Mammary epithelial cell (primary cell): ENCODE measurements at regions of chr6 and their contacts with region 1.

Region 1: GRCh38 chr6:3887150-3887700 is 38.1 kb downstream of the FAM50B start:
- DNase-seq: no peak
- H3K4me3 ChIP-seq: no peak overlapping the region
- H3K27ac ChIP-seq: no peak overlapping the region
- H3K4me1 ChIP-seq: peaks cover 11% of the 10 kb centered on the region
- H3K27me3 ChIP-seq: no peaks in the 10 kb centered on the region
- CTCF ChIP-seq: peak; percentile 38 to 61

Region 2: GRCh38 chr6:3977875-3978711 is 90.9 kb after region 1 on chr6:
- CTCF ChIA-PET with region 1: no interaction called
- dilution Hi-C with region 1: no loop called
- in situ Hi-C with region 1: no loop called
- intact Hi-C with region 1: loop called (anchors 5 kb)
- DNase-seq: peak; percentile 56
- H3K4me3 ChIP-seq: no peak overlapping the region
- H3K27ac ChIP-seq: no peak overlapping the region
- H3K4me1 ChIP-seq: no peaks in the 10 kb centered on the region
- H3K27me3 ChIP-seq: no peaks in the 10 kb centered on the region
- CTCF ChIP-seq: peak; percentile 50 to 59

Region 3: DNA sequence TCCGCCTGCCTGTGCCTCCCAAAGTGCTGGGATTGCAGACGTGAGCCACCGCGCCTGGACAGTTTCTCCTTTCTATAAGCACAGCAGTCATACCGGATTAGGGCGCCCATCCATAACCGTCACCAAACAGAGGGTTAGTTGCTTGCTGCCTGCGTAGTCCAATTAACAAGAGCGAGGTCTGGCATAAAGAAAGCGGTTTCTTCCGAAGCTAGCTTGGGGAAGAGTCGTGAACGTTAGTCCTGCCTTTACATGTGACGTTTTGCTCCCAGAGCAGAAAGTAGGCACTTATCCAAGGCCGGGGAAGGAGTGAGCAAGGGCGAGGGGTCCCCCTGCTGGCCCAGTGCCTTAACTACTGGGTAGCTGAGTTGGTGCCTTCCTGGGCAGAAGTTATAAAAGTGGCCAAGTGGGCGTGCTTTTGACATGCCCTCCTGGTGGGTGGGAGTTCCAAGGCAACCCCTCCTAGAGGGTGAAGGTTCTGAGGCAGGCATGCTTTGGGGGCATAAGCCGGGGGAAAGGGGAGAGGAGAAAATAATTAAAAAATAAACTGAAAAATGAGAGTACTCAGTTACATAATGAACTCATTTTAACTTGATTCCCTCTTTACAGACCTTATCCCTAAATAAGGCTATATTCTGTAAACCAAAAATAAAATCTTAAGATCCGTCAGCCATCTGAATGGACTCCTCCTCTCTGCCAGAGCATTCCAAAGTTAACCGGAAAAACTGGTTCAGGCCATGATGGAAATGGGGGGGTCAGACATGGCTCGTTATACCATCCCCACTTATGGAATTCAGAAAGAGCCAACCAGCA is 103.7 kb after region 1 on chr6:
- CTCF ChIA-PET with region 1: no interaction called
- dilution Hi-C with region 1: no loop called
- in situ Hi-C with region 1: no loop called
- intact Hi-C with region 1: loop called (anchors 5 kb)
- DNase-seq: peak; percentile 77
- H3K4me3 ChIP-seq: peak overlapping the region; percentile 27 to 42 (median 41)
- H3K27ac ChIP-seq: peak overlapping the region; percentile 42
- H3K4me1 ChIP-seq: peaks cover 13% of the 10 kb centered on the region
- H3K27me3 ChIP-seq: no peaks in the 10 kb centered on the region
- CTCF ChIP-seq: peak; percentile 90 to 97

Region 4: GRCh38 chr6:4008324-4009047 is 121.3 kb after region 1 on chr6:
- CTCF ChIA-PET with region 1: no interaction called
- dilution Hi-C with region 1: no loop called
- in situ Hi-C with region 1: no loop called
- intact Hi-C with region 1: loop called (anchors 5 kb)
- DNase-seq: peak; percentile 63
- H3K4me3 ChIP-seq: no peak overlapping the region
- H3K27ac ChIP-seq: peak overlapping the region; percentile 18
- H3K4me1 ChIP-seq: peaks cover 7% of the 10 kb centered on the region
- H3K27me3 ChIP-seq: no peaks in the 10 kb centered on the region
- CTCF ChIP-seq: peak; percentile 56 to 66